ENCODE measurements at regions of chr4 and their contacts with region 1.

Region 1: GRCh38 chr4:156771171-156771837 is 200.3 kb downstream of the PDGFC start:
- DNase-seq: peak; percentile 69
- ATAC-seq: peak; percentile 69
- H3K4me3 ChIP-seq: no peak overlapping the region
- H3K27ac ChIP-seq: peak overlapping the region; percentile 91
- H3K4me1 ChIP-seq: peaks cover 10% of the 10 kb centered on the region
- H3K27me3 ChIP-seq: no peaks in the 10 kb centered on the region
- CTCF ChIP-seq: no peak
- POLR2A ChIP-seq: no peak
- RAD21 ChIP-seq: no peak

Region 2: GRCh38 chr4:156456830-156457229 is 314.5 kb before region 1 on chr4:
- CTCF ChIA-PET with region 1: no interaction called
- POLR2A ChIA-PET with region 1: interaction called, 13 read pairs
- dilution Hi-C with region 1: no loop called
- in situ Hi-C with region 1: no loop called
- intact Hi-C with region 1: no loop called
- DNase-seq: no peak
- ATAC-seq: no peak
- H3K4me3 ChIP-seq: no peak overlapping the region
- H3K27ac ChIP-seq: no peak overlapping the region
- H3K4me1 ChIP-seq: no peaks in the 10 kb centered on the region
- H3K27me3 ChIP-seq: no peaks in the 10 kb centered on the region
- CTCF ChIP-seq: no peak
- POLR2A ChIP-seq: no peak
- RAD21 ChIP-seq: no peak

Measured in IMR-90 (cell line).